Endothelial cell of umbilical vein (primary cell): ENCODE measurements at regions of chr13 and their contacts with region 1.

Region 1: GRCh38 chr13:26628706-26629105 is 71.2 kb downstream of the WASF3 start:
- DNase-seq: peak; percentile 38
- H3K4me3 ChIP-seq: no peak overlapping the region
- H3K27ac ChIP-seq: no peak overlapping the region
- H3K4me1 ChIP-seq: no peaks in the 10 kb centered on the region
- H3K27me3 ChIP-seq: no peaks in the 10 kb centered on the region
- CTCF ChIP-seq: peak; percentile 16 to 26
- POLR2A ChIP-seq: no peak

Region 2: GRCh38 chr13:26449058-26449848 is 179.5 kb before region 1 on chr13:
- CTCF ChIA-PET with region 1: no interaction called
- POLR2A ChIA-PET with region 1: no interaction called
- dilution Hi-C with region 1: no loop called
- intact Hi-C with region 1: no loop called
- DNase-seq: no peak
- H3K4me3 ChIP-seq: no peak overlapping the region
- H3K27ac ChIP-seq: no peak overlapping the region
- H3K4me1 ChIP-seq: no peaks in the 10 kb centered on the region
- H3K27me3 ChIP-seq: no peaks in the 10 kb centered on the region
- CTCF ChIP-seq: no peak
- POLR2A ChIP-seq: no peak

Region 3: DNA sequence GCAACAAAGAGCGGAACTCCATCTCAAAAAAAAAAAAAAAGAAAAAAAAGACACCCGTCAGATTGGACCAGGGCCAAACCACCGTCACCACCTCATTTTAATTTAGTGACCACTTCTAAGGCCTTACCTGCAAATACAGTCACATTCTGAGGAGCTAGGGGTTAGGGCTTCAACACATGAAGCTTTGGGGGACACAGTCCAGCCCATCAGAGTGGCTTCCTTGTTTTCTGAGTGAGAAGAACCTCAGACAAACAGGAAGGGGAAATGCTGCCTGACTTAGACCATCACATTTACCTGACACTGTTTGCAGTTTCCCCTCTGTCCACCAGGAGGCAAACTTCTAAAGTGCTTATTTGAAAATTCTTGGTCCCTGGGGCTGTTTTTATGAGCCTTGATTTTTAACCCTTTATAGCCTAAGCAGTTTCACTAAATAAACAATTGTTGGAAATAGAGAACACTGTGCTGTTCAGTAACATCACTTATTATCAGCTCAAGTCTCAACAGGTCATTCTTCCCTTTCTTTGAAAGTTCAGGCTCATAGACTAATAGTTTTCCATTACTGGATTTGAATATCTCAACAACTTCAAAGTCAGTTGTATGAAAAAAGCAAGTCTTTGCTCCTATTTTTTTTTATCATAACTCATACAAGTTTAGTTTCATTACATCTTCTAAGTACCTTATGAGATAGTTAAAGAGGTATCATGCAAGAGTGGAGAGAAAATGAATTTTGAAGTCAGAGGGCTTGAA is 146.1 kb before region 1 on chr13:
- CTCF ChIA-PET with region 1: interaction called, 12 read pairs
- POLR2A ChIA-PET with region 1: no interaction called
- dilution Hi-C with region 1: no loop called
- intact Hi-C with region 1: loop called (anchors 1 kb)
- DNase-seq: peak; percentile 79
- H3K4me3 ChIP-seq: peak overlapping the region in 1 of 3 experiments; percentile 40
- H3K27ac ChIP-seq: no peak overlapping the region
- H3K4me1 ChIP-seq: peaks cover 2% of the 10 kb centered on the region
- H3K27me3 ChIP-seq: no peaks in the 10 kb centered on the region
- CTCF ChIP-seq: peak; percentile 80 to 85
- POLR2A ChIP-seq: no peak

Region 4: DNA sequence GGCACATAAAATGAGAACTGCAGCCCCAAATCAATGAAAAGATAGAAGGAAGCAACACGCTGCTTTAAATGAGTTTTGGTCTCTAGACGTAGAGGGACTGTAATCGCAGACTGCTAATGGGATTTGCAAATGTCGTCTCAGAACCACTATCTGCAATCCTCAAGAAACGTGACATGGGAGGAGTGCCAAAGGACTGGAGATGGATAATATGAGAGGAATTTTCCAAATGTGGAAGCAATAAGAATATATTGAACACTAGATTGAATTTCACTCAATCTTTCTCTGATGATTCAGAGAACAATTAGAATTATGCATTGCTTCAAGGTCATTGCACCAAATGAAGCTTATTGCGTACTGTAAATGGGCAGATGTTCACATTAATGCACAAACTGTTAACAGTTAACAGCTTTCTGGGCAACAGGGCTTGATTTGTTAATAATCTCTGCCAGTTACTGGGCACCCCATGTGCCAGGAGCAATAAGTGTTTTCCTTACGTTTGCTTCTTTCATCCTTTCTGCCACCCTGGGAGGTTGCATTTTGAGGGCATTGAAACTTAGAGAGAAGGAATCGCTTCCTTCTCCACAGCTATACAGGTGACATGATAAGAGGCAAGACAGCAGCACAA is 134.0 kb before region 1 on chr13:
- CTCF ChIA-PET with region 1: interaction called, 19 read pairs
- POLR2A ChIA-PET with region 1: no interaction called
- dilution Hi-C with region 1: no loop called
- intact Hi-C with region 1: loop called (anchors 5 kb)
- DNase-seq: no peak
- H3K4me3 ChIP-seq: no peak overlapping the region
- H3K27ac ChIP-seq: no peak overlapping the region
- H3K4me1 ChIP-seq: peaks cover 7% of the 10 kb centered on the region
- H3K27me3 ChIP-seq: peaks cover 5 to 7% of the 10 kb centered on the region in 2 experiments
- CTCF ChIP-seq: no peak
- POLR2A ChIP-seq: no peak